ENCODE measurements at regions of chr18 and their contacts with region 1.

Region 1: DNA sequence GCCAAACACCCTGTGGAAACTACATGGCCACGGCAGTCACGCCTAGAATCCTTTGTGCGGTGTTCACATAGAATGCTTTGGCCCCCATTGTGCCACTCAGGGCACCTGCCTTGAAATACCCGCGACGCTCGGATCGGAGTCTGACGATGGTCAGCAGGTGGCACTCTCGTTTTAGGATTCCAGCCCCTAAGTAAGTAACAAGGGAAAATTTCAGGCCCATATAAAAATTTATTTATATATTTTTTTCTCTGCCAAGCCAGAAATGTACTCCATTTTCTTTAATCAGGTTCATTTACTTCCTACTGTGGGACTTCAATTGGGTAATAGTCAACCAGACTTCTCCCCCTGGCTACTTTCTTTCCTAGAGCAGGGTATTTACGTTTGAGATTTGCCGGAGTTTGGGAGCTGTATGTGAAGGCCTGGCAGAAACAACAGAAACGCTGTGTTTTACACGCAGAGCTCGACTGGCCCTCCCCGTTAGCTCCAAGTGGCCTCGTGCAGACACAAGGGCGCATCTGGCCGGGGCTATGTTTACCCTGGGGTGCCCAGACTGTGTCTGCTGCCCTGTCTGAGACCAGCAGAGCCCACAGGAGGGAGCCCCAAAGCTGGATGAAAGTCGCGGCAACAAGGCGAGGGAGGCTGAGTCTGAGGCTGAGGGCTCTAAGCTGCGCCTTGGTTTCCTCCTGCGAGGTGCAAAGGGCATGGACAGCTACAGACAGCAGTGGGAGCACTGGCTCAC is 41.6 kb downstream of the LRRC30 start:
- DNase-seq: peak in 1 of 2 donors; percentile 32
- H3K4me3 ChIP-seq: peak overlapping the region in 2 of 3 donors; percentile 12 to 40
- H3K27ac ChIP-seq: peak overlapping the region; percentile 59 to 80
- H3K4me1 ChIP-seq: no peaks in the 10 kb centered on the region
- H3K27me3 ChIP-seq: no peaks in the 10 kb centered on the region
- CTCF ChIP-seq: peak in 2 of 3 donors; percentile 36 to 47
- POLR2A ChIP-seq: no peak

Region 2: GRCh38 chr18:7195266-7195665 is 77.2 kb before region 1 on chr18:
- intact Hi-C with region 1: loop called (anchors 2 kb)
- DNase-seq: no peak
- H3K4me3 ChIP-seq: no peak overlapping the region
- H3K27ac ChIP-seq: no peak overlapping the region
- H3K4me1 ChIP-seq: no peaks in the 10 kb centered on the region
- H3K27me3 ChIP-seq: no peaks in the 10 kb centered on the region
- CTCF ChIP-seq: no peak
- POLR2A ChIP-seq: no peak

Region 3: GRCh38 chr18:7566567-7567473 is 294.3 kb after region 1 on chr18 and contains the start of gene PTPRM:
- intact Hi-C with region 1: loop called (anchors 2 kb)
- DNase-seq: peak; percentile 60 to 78
- H3K4me3 ChIP-seq: peak within 1 kb of the TSS; percentile 77 to 90 (median 81)
- H3K27ac ChIP-seq: peak within 1 kb of the TSS; percentile 90 to 96
- H3K4me1 ChIP-seq: no peaks in the 10 kb centered on the region
- H3K27me3 ChIP-seq: no peaks in the 10 kb centered on the region
- CTCF ChIP-seq: peak in 1 of 3 donors; percentile 83
- POLR2A ChIP-seq: no peak
- total RNA-seq, gene PTPRM: 41.7 to 181 (median 140) TPM